B cell (primary cell): ENCODE measurements at regions of chr10 and their contacts with region 1.

Region 1: DNA sequence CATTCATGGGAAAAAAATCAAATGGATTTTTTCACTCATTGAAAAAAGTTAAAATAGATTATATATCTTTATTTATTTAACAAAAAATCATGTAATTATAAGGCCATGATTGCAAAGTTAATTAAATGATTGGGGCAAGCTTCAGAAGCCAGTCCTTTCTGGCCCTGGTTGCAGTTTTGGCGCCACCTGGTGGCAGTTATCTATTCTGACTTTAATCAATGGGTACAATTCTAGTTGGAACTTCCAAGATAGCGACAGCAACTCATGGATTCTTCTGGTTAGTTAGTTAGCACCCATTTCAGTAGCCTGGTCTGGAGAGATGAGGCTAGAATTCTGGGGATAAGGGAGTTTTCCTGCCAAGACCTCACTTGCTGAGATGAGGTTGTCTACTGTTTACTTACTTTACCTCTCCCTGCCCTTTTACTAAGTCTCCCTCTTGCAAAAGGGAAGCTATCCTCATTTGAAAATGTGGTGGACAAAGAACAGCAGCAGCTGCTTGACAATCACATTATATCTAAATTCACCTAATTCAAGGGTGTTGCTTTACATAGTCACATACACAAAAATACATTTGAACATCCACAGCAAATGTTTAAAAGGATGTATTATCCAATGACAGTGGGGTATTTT is 42.3 kb downstream of the NOC3L start:
- DNase-seq: peak; percentile 65
- ATAC-seq: no peak
- H3K4me3 ChIP-seq: no peak overlapping the region
- H3K4me3 Mint-ChIP-seq: no peak overlapping the region
- H3K27ac ChIP-seq: no peak overlapping the region
- H3K27ac Mint-ChIP-seq: no peak overlapping the region
- H3K4me1 ChIP-seq: no peaks in the 10 kb centered on the region
- H3K4me1 Mint-ChIP-seq: no peaks in the 10 kb centered on the region
- H3K27me3 ChIP-seq: no peaks in the 10 kb centered on the region
- H3K27me3 Mint-ChIP-seq: no peaks in the 10 kb centered on the region
- CTCF ChIP-seq: peak; percentile 96

Region 2: GRCh38 chr10:93916257-93917063 is 403.9 kb before region 1 on chr10:
- CTCF ChIA-PET with region 1: interaction called, 12 read pairs
- POLR2A ChIA-PET with region 1: no interaction called
- intact Hi-C with region 1: no loop called
- DNase-seq: no peak
- ATAC-seq: no peak
- H3K4me3 ChIP-seq: no peak overlapping the region
- H3K4me3 Mint-ChIP-seq: no peak overlapping the region
- H3K27ac ChIP-seq: no peak overlapping the region
- H3K27ac Mint-ChIP-seq: no peak overlapping the region
- H3K4me1 ChIP-seq: no peaks in the 10 kb centered on the region
- H3K4me1 Mint-ChIP-seq: no peaks in the 10 kb centered on the region
- H3K27me3 ChIP-seq: no peaks in the 10 kb centered on the region
- H3K27me3 Mint-ChIP-seq: no peaks in the 10 kb centered on the region
- CTCF ChIP-seq: peak; percentile 9

Region 3: GRCh38 chr10:94279835-94280709 is 40.3 kb before region 1 on chr10:
- CTCF ChIA-PET with region 1: no interaction called
- POLR2A ChIA-PET with region 1: no interaction called
- intact Hi-C with region 1: loop called (anchors 1 kb)
- DNase-seq: peak; percentile 71
- ATAC-seq: peak; percentile 49
- H3K4me3 ChIP-seq: no peak overlapping the region
- H3K4me3 Mint-ChIP-seq: no peak overlapping the region
- H3K27ac ChIP-seq: no peak overlapping the region
- H3K27ac Mint-ChIP-seq: no peak overlapping the region
- H3K4me1 ChIP-seq: no peaks in the 10 kb centered on the region
- H3K4me1 Mint-ChIP-seq: peaks cover 6% of the 10 kb centered on the region
- H3K27me3 ChIP-seq: peaks cover 0 to 9% (median 3%) of the 10 kb centered on the region in 4 experiments
- H3K27me3 Mint-ChIP-seq: peaks cover 24% of the 10 kb centered on the region
- CTCF ChIP-seq: peak; percentile 98

Region 4: DNA sequence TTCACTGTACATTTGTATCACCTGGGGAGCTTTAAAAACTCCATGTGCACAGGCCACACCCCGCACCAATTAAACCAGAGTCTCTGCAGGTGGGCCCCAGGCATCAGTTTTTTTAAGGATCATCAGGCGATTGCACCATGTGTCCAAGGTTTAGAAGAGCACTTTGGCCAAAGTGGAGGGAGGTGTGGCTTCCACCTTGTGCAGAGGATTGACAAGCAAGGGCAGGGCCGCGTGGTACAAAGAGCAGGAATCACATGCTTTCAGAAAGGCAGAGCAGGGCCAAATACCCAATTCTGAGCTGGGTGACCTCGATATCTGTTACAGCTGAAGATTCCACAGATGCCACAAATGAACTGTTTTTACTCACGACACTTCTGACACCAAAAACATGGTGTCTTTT is 10.0 kb before region 1 on chr10:
- CTCF ChIA-PET with region 1: interaction called, 12 read pairs
- POLR2A ChIA-PET with region 1: no interaction called
- intact Hi-C with region 1: no loop called
- DNase-seq: no peak
- ATAC-seq: no peak
- H3K4me3 ChIP-seq: no peak overlapping the region
- H3K4me3 Mint-ChIP-seq: no peak overlapping the region
- H3K27ac ChIP-seq: no peak overlapping the region
- H3K27ac Mint-ChIP-seq: no peak overlapping the region
- H3K4me1 ChIP-seq: no peaks in the 10 kb centered on the region
- H3K4me1 Mint-ChIP-seq: no peaks in the 10 kb centered on the region
- H3K27me3 ChIP-seq: peaks cover 0 to 10% (median 6%) of the 10 kb centered on the region in 4 experiments
- H3K27me3 Mint-ChIP-seq: peaks cover 43% of the 10 kb centered on the region
- CTCF ChIP-seq: no peak

Region 5: DNA sequence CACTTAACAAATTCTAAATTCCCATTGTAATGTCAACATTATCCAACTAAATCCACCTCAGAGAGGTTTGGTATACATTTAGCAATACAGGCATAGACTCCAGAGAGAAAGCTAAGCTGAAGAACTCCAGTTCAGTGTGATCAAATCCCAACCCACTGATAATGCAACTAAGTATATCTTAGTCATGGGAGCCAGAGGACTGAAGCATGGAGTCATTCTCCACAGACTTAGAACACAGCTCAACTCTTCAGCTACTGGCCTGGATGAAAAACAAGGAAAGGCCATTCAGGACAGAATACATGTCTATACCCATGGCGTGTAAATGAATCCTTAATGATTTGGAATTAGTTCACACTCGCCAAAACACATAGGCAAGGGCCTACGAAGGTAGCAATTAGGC is 14.5 kb after region 1 on chr10:
- CTCF ChIA-PET with region 1: interaction called, 51 read pairs
- POLR2A ChIA-PET with region 1: no interaction called
- intact Hi-C with region 1: no loop called
- DNase-seq: no peak
- ATAC-seq: no peak
- H3K4me3 ChIP-seq: no peak overlapping the region
- H3K4me3 Mint-ChIP-seq: no peak overlapping the region
- H3K27ac ChIP-seq: no peak overlapping the region
- H3K27ac Mint-ChIP-seq: no peak overlapping the region
- H3K4me1 ChIP-seq: no peaks in the 10 kb centered on the region
- H3K4me1 Mint-ChIP-seq: no peaks in the 10 kb centered on the region
- H3K27me3 ChIP-seq: no peaks in the 10 kb centered on the region
- H3K27me3 Mint-ChIP-seq: no peaks in the 10 kb centered on the region
- CTCF ChIP-seq: no peak

Region 6: DNA sequence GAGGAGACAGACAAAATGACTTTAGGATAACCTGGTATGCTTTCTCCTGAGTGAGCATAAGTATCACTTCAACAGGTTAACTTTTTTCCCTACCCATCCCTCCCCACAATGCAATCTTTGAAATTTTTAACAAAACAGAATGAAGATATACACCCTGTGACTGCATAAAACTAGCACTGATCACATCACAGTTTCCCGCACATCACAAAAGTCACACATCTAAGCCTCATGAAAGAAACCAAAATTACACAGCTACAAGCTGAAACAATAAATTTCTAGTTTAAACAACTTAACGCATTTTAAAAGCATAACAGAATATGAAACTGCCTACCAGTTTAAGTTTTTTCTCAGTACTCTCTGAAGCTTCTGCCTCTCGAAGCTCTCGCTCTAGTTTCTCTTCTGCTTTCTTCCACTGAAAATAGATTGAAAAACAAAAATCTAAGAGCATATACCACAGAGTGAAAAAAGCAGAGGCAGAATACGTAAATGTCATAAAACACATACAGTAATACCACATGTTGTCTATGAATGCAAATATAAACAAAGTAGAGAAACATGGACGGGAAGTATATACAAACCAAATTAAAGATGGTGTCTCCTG is 24.2 kb after region 1 on chr10:
- CTCF ChIA-PET with region 1: interaction called, 14 read pairs
- POLR2A ChIA-PET with region 1: interaction called, 4 read pairs
- intact Hi-C with region 1: no loop called
- DNase-seq: peak; percentile 70
- ATAC-seq: peak; percentile 85
- H3K4me3 ChIP-seq: peak overlapping the region in 4 of 5 experiments; percentile 20 to 52 (median 36)
- H3K4me3 Mint-ChIP-seq: peak overlapping the region; percentile 89
- H3K27ac ChIP-seq: peak overlapping the region; percentile 70 to 82
- H3K27ac Mint-ChIP-seq: peak overlapping the region; percentile 93
- H3K4me1 ChIP-seq: peaks cover 17 to 25% of the 10 kb centered on the region in 2 donors
- H3K4me1 Mint-ChIP-seq: peaks cover 26% of the 10 kb centered on the region
- H3K27me3 ChIP-seq: no peaks in the 10 kb centered on the region
- H3K27me3 Mint-ChIP-seq: no peaks in the 10 kb centered on the region
- CTCF ChIP-seq: no peak